Right ventricle myocardium superior (tissue), 1 donor: ENCODE measurements at regions of chr11 and their contacts with region 1.

Region 1: DNA sequence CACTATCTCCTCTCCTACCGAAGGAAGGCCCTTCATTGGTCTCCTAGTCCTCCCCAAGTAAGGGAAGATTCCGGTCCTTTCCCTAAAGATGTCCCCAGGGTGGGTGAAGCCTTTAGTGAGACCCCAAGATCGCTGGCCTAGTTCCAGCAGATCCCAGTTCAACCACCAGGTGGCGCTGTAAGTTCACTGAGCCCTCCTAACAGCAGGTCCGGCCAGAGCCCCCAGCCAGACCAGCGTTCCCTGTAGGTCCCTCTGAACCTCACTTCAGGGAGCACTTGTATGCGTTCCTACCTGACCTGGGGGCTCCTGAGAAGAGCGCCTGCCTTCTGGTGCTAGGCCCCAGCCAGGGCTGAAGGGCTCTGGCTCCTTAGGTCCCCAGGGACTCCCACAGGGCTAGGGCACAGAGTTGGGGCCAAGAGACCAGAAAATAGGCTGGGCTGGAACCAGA is 38.1 kb downstream of the LMO1 start:
- DNase-seq: peak; percentile 84
- ATAC-seq: peak; percentile 73

Region 2: DNA sequence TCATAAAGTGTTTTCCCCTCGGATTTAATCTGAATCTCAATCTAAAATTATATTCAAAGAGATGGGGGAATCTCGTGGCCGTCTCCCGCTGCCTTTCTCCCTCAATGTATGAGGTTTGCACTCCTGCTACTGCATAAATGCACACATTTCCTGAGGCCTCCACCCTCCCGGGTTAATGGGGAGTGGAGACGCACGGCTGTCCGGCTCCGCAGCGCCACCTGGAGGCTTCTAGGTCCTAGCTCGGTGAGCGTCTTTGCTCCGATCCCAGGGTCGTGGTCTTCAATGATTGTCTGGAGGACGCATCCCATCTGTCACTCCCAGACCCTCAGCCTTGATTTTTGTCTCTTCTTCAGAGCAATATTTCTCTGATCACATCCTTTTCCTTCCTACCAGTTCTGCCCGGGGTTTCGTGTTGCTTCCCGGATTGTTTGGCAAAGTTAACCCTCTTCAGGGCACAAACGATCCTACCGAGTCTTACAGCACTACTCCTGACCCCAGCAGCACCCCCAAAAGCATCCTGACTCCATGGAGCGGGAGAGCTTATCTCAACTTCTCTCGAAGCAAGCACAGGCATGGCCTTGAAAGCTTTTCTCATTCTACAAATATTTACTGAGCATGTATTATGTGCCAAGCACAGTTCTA is 38.3 kb after region 1 on chr11 and contains the start of gene LMO1:
- intact Hi-C with region 1: loop called (anchors 2 kb)
- DNase-seq: peak; percentile 86
- ATAC-seq: peak; percentile 90
- total RNA-seq, gene LMO1: 2.3 TPM

Region 3: DNA sequence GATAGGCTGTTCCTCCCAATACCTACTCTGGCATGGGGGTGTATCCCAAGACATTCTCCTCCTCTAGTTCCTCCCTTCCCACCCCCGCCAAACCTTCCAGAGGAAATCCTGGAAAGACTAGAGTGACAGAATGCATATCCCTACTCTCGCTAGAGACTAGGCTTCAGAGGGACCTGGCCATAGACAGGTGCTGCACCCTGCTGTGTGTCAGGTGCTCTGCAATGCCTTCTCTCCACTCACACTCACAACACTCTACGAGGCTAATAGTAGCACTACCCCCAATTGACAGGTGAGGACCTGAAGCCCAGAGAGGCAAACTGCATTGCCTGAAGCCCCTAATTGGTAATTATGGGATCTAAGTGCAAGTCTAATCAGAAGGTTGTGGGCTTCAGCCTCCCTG is 84.2 kb after region 1 on chr11:
- intact Hi-C with region 1: loop called (anchors 10 kb)
- DNase-seq: no peak
- ATAC-seq: no peak